ENCODE measurements at regions of chr16 and their contacts with region 1.

Region 1: DNA sequence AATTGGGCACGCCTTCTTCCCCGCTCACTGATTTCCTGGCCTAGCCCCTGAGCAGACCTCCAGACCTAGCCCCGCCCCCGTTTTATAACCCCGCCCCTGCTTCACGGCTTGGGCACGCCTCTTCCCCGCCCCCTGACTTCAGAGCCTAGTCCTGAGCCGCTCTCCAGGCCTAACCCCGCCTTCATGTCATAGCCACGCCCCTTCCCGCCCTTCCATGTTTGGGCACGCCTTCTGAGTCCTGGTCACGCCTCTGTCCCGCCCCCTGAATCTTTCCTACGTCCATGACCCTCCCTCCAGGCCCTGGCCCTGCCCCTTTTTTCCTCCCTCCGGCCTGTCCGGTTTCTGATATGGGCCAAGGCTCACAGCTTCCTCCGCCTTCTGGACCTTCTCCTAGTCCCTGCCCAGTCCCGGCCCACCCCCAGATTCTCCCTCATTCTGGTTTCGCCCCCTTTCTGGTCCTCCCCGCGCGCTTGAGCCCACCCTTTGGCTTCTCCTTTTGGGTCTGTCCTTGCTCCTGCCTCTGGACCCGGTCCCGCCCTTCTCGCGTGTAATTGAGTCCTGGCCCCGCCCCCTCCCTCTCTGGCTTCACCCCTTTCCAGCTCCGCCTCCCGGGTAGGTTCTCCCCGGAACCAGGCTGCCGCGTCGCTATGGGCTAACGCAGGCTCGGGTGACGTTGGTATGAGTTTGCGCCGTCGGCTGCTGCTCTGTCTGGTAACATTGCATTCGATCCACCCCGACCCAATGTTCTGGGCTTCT is 15.1 kb upstream of the EEF2K start:
- DNase-seq: peak; percentile 97 to 100 (median 100)

Region 2: GRCh38 chr16:21952793-21953540 is 238.0 kb before region 1 on chr16 and contains the start of gene UQCRC2:
- intact Hi-C with region 1: loop called (anchors 2 kb)
- DNase-seq: peak; percentile 86 to 99 (median 91)

Region 3: GRCh38 chr16:22001591-22001990 is 189.4 kb before region 1 on chr16:
- intact Hi-C with region 1: loop called (anchors 1 kb)
- DNase-seq: no peak

Region 4: GRCh38 chr16:22139008-22139407 is 51.9 kb before region 1 on chr16:
- intact Hi-C with region 1: no loop called
- DNase-seq: no peak

Region 5: GRCh38 chr16:22217889-22218730 is 27.2 kb after region 1 on chr16:
- intact Hi-C with region 1: no loop called
- DNase-seq: no peak

Region 6: GRCh38 chr16:22297114-22297878 is 106.3 kb after region 1 on chr16 and contains the start of gene POLR3E:
- intact Hi-C with region 1: loop called (anchors 1 kb)
- DNase-seq: peak; percentile 96 to 100 (median 98)

Measured in posterior cingulate gyrus (tissue), 11 donors.